Aorta (tissue), 5 donors: ENCODE measurements at regions of chr3 and their contacts with region 1.

Region 1: GRCh38 chr3:119279101-119279554 is 15.1 kb upstream of the ARHGAP31 start:
- DNase-seq: peak; percentile 62 to 79
- ATAC-seq: peak; percentile 83
- H3K4me3 ChIP-seq: no peak overlapping the region
- H3K27ac ChIP-seq: no peak overlapping the region
- H3K4me1 ChIP-seq: no peaks in the 10 kb centered on the region
- H3K27me3 ChIP-seq: no peaks in the 10 kb centered on the region

Region 2: DNA sequence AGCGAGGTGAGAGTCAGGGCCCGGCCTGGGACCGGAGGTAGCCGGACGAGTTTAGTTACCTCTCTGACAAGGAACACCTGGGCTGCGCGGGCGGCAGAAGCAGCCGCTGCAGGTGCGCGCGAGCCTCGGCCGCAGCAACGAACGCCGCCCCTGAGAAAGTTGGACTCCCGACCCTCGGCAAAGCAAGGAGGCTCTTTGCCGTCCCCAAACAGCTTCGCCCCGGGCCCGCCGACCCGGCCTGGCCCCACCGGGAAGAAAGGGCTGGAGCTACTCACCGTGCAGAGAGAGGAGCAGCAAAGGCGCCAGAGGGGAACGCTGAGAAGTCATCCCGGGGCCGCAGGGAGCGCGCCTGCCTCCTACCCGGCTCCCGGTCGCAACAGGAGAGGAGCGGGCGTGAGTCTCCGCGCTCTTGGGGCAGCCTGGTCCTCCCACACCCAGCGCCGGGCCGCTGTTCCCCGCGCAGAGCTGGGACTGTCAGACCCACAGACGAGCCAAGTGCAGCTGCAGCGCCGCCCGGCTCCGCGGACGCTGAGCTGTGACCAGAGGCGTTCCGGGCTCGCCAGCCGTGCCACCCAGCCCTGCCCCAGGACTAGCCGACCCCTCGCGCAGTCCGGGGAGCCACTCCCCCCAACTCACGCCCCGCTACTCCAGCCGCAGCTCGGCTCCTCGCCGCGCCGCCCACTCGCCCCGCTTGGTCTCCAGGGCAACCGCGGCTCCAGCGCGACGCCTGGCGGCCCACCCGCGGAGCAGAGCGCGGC is 244.7 kb before region 1 on chr3 and contains the start of gene IGSF11:
- intact Hi-C with region 1: no loop called
- DNase-seq: peak; percentile 59 to 84
- ATAC-seq: peak; percentile 86
- H3K4me3 ChIP-seq: peak within 1 kb of the TSS in 1 of 2 donors; percentile 38
- H3K27ac ChIP-seq: no peak within 1 kb of the TSS
- H3K4me1 ChIP-seq: no peaks in the 10 kb centered on the region
- H3K27me3 ChIP-seq: no peaks in the 10 kb centered on the region
- total RNA-seq, gene IGSF11: 0.42 to 0.75 TPM

Region 3: DNA sequence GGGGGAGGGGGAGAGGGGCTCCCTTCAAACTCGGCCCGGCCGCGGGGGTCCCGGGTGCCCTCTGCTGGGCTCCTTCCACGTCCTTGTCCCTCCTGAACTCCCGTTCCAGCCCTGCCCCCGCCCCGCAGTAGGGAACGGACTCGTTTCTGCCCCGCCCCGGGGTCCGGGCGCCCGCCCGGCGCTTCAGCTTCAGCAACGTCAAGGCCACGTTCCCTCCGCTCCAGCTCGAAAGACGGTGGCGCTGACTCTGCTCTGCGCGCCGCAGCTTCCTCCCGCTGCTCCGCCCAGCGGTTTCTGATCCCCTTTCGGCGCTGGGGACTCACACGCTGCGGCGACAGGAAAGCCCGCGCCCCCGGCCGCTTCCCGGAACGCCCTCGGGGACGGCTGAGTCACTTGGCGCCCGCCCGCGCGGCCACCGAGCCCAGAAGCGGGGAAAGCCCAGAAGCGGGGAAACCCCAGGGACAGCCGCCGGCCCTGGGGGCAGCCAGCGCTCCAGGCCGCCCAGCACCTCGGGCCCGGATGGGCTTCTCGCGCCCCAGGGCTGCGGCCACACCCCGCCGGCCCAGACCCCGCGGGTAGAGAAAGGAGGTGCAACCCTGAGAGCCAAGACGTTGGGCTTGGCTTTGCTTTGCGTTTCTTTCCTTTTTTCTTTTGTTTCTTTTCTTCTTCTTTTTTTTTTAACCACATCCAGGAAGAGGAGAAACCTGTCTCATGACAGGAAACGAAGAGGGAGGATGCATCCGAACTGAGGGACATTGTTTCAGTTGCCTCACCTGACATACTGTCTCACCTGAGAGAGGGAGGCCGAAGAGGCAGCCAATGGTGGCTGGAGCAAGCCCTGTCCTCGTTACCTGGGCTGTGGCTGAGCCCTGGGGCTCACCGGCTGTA is 44.0 kb after region 1 on chr3:
- intact Hi-C with region 1: loop called in 1 of 2 experiments (anchors 10 kb)
- DNase-seq: peak; percentile 96
- ATAC-seq: peak; percentile 94
- H3K4me3 ChIP-seq: peak overlapping the region; percentile 40 to 69
- H3K27ac ChIP-seq: peak overlapping the region in 1 of 2 donors; percentile 60
- H3K4me1 ChIP-seq: no peaks in the 10 kb centered on the region
- H3K27me3 ChIP-seq: no peaks in the 10 kb centered on the region

Region 4: DNA sequence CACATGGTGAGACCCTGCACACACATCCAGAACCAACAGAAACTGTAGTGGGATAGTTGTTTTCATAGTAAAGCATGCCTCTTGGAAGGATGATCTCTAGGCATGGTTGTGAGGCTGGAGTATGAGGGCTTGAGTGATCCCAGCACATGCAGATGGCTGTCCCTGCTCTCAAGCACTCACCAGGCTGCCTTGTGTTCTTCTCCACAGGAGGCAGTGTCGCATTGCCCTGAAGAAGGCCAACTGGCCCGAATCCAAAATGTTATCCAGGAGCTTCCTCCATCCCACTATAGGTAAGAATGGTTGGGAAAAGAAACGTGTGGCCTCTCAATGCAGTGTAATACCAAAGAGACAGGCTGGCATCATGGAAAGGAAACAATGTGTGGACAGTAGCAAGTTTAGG is 101.6 kb after region 1 on chr3:
- intact Hi-C with region 1: loop called in 1 of 2 experiments (anchors 10 kb)
- DNase-seq: no peak
- ATAC-seq: no peak
- H3K4me3 ChIP-seq: no peak overlapping the region
- H3K27ac ChIP-seq: no peak overlapping the region
- H3K4me1 ChIP-seq: no peaks in the 10 kb centered on the region
- H3K27me3 ChIP-seq: no peaks in the 10 kb centered on the region

Region 5: GRCh38 chr3:119401503-119402372 is 122.6 kb after region 1 on chr3:
- intact Hi-C with region 1: loop called in 1 of 2 experiments (anchors 10 kb)
- DNase-seq: no peak
- ATAC-seq: no peak
- H3K4me3 ChIP-seq: no peak overlapping the region
- H3K27ac ChIP-seq: no peak overlapping the region
- H3K4me1 ChIP-seq: no peaks in the 10 kb centered on the region
- H3K27me3 ChIP-seq: no peaks in the 10 kb centered on the region

Region 6: DNA sequence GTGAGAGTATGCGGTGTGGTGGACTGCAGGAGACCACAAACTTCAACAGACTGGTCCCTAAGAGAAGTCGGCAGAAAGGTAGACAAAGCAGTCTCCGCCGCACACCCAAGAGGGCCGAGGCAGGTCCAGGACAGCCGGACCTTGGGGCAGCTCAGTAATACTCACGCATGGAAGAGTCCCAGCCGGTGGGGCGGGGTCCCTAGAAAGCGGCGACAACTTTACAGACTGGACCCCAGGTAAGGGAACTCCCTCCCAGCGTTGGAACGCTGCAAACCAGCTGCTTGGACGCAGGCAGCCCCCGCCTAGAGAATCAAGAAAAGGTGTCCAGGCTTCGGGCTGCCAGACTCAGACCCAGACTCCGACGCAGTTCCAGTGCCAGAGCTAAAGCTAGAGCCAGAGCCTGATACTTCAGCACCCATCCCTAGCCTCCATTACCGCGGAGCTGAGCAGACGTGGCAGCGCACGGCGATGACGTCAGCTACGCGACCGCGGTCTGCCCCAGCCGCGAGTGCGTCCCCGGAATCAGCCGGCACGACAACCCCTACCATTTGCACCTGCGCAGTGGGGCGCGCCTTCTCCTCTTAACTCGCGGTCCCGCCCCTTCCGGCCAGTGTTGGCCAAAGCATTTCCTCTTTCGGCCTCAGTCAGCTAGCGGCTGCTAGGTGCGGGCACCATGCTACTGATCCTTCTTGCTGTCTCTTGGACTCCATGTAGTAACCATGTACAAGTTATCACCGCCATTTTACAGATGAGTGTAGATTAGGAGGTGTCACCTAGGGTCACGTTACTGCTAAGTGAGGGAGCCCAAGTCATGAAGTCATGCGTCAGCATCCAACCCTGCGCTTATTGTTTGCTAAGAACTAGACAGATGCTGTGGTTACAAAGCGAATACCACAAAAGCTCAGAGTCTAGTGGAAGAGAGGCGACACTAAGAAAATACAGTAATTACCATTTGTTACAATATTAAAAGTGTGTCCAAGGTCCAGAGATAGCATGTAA is 184.3 kb after region 1 on chr3 and contains the start of gene TMEM39A:
- intact Hi-C with region 1: loop called in 1 of 2 experiments (anchors 10 kb)
- DNase-seq: peak; percentile 100
- ATAC-seq: peak; percentile 99
- H3K4me3 ChIP-seq: peak within 1 kb of the TSS; percentile 80 to 87
- H3K27ac ChIP-seq: peak within 1 kb of the TSS; percentile 37 to 66
- H3K4me1 ChIP-seq: no peaks in the 10 kb centered on the region
- H3K27me3 ChIP-seq: no peaks in the 10 kb centered on the region
- total RNA-seq, gene TMEM39A: 39.6 to 45.7 TPM